GM10248 (cell line): ENCODE measurements at regions of chr2 and their contacts with region 1.

Region 1: GRCh38 chr2:130342533-130343275 is at the start of gene IMP4:
- DNase-seq: peak; percentile 91
- CTCF ChIP-seq: no peak

Region 2: DNA sequence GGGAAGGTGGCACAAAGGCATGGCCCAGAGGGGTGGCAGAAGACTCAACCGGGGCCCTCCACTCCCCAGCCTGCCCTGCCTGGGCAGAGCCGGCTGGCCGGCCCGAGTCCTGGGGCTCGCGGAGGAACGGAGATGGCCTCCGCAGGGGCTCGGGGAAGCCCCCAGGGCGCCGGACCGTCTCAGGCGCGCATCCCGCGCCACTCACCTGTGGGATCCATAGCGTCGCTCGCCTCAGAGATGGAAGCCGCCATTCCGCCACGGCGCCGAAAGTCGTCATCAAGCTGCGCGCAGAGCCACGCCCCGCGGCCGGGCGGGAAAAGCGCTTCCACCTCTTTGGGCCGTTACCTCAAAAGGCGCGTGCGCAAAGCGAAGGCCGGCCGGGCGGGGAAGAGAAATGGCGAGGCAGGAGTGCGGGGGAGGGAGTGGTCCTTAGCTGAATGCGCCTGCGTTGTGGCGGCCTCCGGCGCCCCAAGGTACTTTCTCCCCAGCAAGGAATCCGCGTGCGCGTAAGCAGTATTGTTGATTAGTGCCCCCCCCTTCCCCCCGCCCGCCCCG is 161.3 kb before region 1 on chr2 and contains the start of gene SMPD4:
- CTCF ChIA-PET with region 1: interaction called, 20 read pairs
- POLR2A ChIA-PET with region 1: no interaction called
- DNase-seq: peak; percentile 92
- CTCF ChIP-seq: no peak

Region 3: GRCh38 chr2:130310881-130311280 is 31.8 kb before region 1 on chr2:
- CTCF ChIA-PET with region 1: no interaction called
- POLR2A ChIA-PET with region 1: no interaction called
- DNase-seq: no peak
- CTCF ChIP-seq: no peak

Region 4: DNA sequence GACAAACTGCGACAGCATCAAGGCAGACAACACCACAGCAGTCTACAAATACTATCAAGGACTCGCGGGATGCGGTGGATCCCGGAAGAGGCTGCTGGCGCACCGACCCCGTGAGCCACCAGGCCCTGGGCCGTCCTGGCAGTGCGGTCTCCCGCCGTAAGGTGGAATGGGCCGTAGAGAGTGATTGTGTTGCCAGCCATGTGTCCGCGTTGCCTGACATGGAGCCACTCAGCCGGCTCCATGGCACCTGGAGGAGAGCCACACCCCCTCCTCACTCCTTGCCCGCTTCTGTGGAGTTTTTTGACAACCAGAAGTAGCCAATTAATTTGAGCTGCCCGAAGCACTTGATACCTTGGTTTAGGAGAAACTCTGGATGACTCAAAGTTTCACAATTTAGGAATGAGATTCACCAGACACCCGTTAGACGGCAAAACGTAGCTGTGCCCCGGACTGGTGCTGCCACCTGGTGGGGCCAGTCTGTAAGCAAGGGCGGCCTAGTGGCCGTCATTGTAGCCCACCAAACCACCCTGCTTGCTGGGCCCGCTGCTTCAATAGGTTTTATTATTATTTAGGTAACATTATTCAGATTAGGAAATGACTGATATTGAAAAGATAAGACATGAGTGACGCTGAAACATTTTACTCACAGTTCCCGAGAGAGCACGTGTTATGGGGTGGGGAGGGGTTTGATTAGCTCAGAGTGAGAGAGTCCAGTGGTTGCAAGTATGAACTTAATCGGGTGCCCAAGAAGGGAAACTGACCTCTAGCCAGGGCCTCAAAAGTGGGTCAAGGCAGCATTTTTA is 10.2 kb before region 1 on chr2:
- CTCF ChIA-PET with region 1: interaction called, 32 read pairs
- POLR2A ChIA-PET with region 1: interaction called, 3 read pairs
- DNase-seq: peak; percentile 83
- CTCF ChIP-seq: peak; percentile 92

Region 5: GRCh38 chr2:130355172-130355577 is 12.5 kb after region 1 on chr2:
- CTCF ChIA-PET with region 1: interaction called, 22 read pairs
- POLR2A ChIA-PET with region 1: interaction called, 13 read pairs
- DNase-seq: no peak
- CTCF ChIP-seq: no peak